ENCODE measurements at regions of chr19 and their contacts with region 1.

Region 1: DNA sequence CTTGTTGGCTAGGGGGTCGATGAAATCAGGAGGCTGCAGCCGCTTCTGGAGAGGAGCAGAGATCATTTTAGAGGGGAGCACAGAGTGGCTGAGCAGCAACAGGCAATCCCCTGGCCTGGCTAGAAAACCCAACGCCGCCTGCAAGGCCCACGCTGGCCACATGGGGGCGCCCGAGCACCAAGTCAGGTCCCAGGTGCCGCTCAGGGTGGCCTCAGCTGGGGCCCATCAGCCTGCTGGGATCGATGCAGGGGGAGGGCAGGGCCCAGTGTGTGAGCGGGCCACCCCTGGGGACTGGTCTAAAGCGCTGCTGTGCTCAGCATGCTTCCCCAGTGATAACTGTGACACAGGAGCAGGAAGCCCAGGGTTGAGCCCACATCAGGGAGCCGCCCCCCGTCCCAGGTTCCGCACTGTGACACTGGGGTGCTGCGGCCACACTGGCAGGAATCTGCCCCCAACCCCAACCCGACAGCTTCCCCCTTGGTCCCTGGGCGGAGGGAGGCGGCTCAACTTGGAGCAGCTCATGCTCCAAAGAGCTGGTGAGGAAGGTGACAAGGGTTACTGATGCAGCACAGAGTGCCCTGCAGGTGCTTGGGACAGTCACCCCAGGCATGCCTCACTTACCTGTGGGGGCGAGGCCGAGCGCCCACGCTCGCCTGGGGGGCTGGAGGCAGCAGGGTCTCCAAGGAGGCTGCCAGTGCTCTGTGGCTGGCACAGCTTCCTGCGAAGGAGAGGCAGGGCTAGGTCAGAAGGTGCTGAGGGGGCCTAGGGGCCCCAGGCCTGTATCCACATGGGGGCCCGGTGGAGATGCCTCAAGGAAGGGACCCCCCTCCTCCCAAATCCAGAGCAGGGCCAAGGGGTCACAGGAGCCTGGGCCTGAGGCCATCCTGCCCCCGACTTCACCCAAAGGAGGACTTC is 13.3 kb upstream of the ISYNA1 start:
- DNase-seq: no peak
- ATAC-seq: peak; percentile 91
- H3K4me3 ChIP-seq: no peak overlapping the region
- H3K27ac ChIP-seq: no peak overlapping the region; the same call in 1 of the 2 replicates
- H3K4me1 ChIP-seq: peaks cover 3 to 8% of the 10 kb centered on the region in 2 experiments; a peak in 3 of 4 replicates
- H3K27me3 ChIP-seq: no peaks in the 10 kb centered on the region
- CTCF ChIP-seq: peak; percentile 74 to 97 (median 96)
- POLR2A ChIP-seq: no peak
- RAD21 ChIP-seq: peak; percentile 88

Region 2: DNA sequence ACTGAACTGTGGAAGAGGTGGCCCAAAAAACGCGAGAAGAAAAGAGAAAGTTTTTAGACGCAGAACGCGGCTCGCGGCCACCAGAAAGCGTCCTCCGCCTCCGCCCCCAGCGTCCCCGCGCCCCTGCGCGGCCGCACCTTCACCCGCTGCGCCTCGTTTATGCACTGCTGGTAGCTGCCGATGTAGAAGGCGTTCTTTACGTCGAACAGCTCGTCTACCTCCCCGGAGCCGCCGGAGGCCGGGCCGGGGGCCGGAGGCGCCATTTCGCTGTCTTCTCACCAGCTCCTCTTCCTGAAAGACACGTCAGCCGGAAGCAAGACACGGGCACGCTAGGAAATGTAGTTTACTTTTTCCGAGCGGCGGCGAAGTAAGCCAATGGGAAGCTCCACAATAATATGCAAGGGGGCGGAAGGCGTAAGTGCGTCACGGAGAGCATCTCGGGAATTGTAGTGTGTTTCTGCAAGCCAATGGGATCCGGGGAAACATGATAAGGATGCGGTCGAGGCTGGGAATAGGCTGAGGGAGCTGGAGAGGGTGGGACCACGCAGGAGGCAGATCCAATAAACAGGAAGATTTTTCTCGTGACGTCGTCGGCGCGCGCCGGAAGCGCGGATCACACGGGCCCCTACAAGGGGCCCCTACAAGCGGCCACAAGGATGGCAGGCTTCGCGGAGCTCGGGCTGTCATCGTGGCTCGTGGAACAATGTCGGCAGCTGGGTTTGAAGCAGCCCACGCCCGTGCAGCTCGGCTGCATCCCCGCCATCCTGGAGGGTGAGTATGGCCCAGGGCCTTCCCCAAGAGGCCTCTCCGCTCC is 468.1 kb after region 1 on chr19 and contains the starts of genes COPE and DDX49:
- CTCF ChIA-PET with region 1: interaction called, 4 read pairs
- POLR2A ChIA-PET with region 1: no interaction called
- RAD21 ChIA-PET with region 1: interaction called in 1 of 2 experiments, 3 read pairs
- intact Hi-C with region 1: loop called (anchors 5 kb)
- DNase-seq: peak; percentile 99
- ATAC-seq: peak; percentile 95
- H3K4me3 ChIP-seq: peak within 1 kb of the TSS; percentile 86 to 100
- H3K27ac ChIP-seq: peak within 1 kb of the TSS; percentile 79
- H3K4me1 ChIP-seq: peaks cover 16 to 21% of the 10 kb centered on the region in 2 experiments
- H3K27me3 ChIP-seq: no peaks in the 10 kb centered on the region
- CTCF ChIP-seq: no peak
- POLR2A ChIP-seq: peak; percentile 56
- RAD21 ChIP-seq: no peak
- total RNA-seq, gene COPE: 263 TPM
- total RNA-seq, gene DDX49: 51.9 TPM

Measured in HCT116 (cell line).